Psoas muscle (tissue), 8 donors: ENCODE measurements at regions of chr19 and their contacts with region 1.

Region 1: GRCh38 chr19:36687214-36688056 is at the start of gene ZNF567:
- DNase-seq: peak; percentile 98
- ATAC-seq: peak; percentile 99 to 100 (median 100)
- H3K4me3 ChIP-seq: peak within 1 kb of the TSS; percentile 84
- H3K27ac ChIP-seq: peak within 1 kb of the TSS; percentile 72
- H3K4me1 ChIP-seq: peaks cover 13% of the 10 kb centered on the region
- H3K27me3 ChIP-seq: no peaks in the 10 kb centered on the region
- CTCF ChIP-seq: no peak
- total RNA-seq, gene ZNF567: 1.8 to 3.6 (median 2.3) TPM

Region 2: DNA sequence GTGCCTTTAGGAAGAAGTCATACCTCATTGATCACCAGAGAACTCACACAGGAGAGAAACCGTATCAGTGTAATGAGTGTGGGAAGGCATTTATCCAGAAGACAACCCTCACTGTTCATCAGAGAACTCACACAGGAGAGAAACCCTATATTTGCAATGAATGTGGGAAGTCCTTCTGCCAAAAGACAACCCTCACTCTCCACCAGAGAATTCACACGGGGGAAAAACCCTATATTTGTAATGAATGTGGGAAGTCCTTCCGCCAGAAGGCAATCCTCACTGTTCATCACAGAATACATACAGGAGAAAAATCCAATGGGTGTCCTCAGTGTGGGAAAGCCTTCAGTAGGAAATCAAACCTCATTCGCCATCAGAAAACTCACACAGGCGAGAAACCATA is 60.4 kb before region 1 on chr19:
- intact Hi-C with region 1: no loop called
- DNase-seq: no peak
- ATAC-seq: no peak
- H3K4me3 ChIP-seq: no peak overlapping the region
- H3K27ac ChIP-seq: no peak overlapping the region
- H3K4me1 ChIP-seq: no peaks in the 10 kb centered on the region
- H3K27me3 ChIP-seq: peaks cover 0 to 2% (median 0%) of the 10 kb centered on the region in 3 donors
- CTCF ChIP-seq: no peak

Region 3: GRCh38 chr19:36665832-36666231 is 21.6 kb before region 1 on chr19:
- intact Hi-C with region 1: loop called in 1 of 2 experiments (anchors 2 kb)
- DNase-seq: no peak
- ATAC-seq: no peak
- H3K4me3 ChIP-seq: peak overlapping the region; percentile 91
- H3K27ac ChIP-seq: no peak overlapping the region
- H3K4me1 ChIP-seq: peaks cover 7% of the 10 kb centered on the region
- H3K27me3 ChIP-seq: no peaks in the 10 kb centered on the region
- CTCF ChIP-seq: no peak